H1 (cell line): ENCODE measurements at regions of chr7 and their contacts with region 1.

Region 1: DNA sequence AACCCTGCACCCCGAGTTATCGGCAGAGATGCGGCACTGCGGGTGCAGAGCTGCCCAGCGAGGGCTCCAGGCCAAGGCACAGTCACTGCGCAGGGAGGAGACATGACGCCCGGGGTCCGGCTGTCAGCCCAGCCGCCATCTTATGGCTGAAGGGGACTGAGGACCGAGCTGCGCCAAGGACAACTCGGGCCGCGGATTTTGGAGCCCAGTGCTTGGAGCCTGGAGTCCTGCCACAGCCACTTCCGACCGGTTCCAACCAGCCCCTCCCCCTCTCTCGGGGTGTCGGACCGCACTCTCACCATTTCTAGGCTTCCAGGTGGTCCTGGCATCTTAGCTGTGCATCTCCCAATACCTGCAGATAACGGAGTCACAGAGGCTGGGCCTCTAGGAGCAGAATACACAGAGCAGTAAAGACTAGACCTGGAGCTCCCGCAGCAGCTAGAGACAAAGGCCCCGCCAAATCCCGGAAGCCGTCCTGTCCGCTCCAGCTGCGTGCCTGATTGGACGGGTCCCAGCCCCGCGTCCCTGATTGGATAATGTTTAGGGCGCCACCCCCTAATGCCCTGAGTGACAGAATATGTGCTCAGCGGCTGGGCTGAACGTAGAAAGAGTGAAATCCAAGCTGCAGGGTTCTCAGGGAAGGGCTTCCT is at the start of gene ZNF680:
- DNase-seq: peak; percentile 71 to 85
- H3K4me3 ChIP-seq: peak within 1 kb of the TSS in 1 of 4 experiments; percentile 76; a peak in 2 of 8 replicates
- H3K27ac ChIP-seq: no peak within 1 kb of the TSS
- H3K4me1 ChIP-seq: no peaks in the 10 kb centered on the region; a peak in 1 of 7 replicates
- H3K27me3 ChIP-seq: no peaks in the 10 kb centered on the region
- CTCF ChIP-seq: no peak
- EP300 ChIP-seq: no peak
- POLR2A ChIP-seq: no peak
- RAD21 ChIP-seq: no peak
- total RNA-seq, gene ZNF680: 15.3 and 16.9 TPM in 2 replicates

Region 2: GRCh38 chr7:64574540-64575126 is 11.9 kb after region 1 on chr7:
- CTCF ChIA-PET with region 1: interaction called, 4 read pairs
- POLR2A ChIA-PET with region 1: interaction called, 46 read pairs
- DNase-seq: peak in 1 of 2 experiments; percentile 50
- H3K4me3 ChIP-seq: peak overlapping the region in 1 of 4 experiments; percentile 20; a peak in 2 of 8 replicates
- H3K27ac ChIP-seq: no peak overlapping the region
- H3K4me1 ChIP-seq: no peaks in the 10 kb centered on the region
- H3K27me3 ChIP-seq: no peaks in the 10 kb centered on the region
- CTCF ChIP-seq: no peak
- EP300 ChIP-seq: no peak
- POLR2A ChIP-seq: no peak
- RAD21 ChIP-seq: no peak

Region 3: DNA sequence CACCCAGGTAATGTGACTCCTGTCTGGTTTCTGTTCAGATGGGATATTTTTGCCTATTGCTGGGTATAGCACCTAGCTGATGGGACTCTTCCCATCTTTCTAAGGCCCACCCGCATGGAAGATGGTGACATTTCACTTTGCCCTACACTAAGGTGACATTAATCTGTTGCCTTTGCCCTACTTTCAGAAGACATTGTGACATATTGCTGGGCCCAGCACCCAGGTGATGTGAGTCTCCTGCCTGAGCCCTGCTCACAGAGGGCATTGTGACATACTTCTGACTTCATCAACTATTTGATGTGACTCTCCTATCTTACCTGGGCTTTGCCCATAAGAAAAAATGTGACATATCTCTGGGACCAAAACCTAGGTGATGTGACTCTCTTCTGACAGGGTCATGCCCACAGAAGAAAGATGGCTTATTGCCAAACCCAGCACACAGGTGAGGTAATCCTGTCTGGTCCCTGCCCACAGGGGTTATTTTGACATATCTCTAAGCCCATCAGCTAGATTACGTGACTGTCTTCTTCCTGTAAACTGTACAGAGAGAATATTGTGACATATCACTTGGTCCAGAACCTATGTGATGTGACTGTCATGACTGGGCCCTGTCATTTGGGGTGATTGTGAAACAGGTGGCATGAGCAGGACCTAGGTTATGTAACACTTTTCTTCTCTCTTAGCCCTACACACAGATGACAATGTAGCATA is 48.8 kb after region 1 on chr7:
- CTCF ChIA-PET with region 1: no interaction called
- POLR2A ChIA-PET with region 1: no interaction called
- DNase-seq: no peak
- H3K4me3 ChIP-seq: no peak overlapping the region
- H3K27ac ChIP-seq: no peak overlapping the region
- H3K4me1 ChIP-seq: no peaks in the 10 kb centered on the region
- H3K27me3 ChIP-seq: no peaks in the 10 kb centered on the region
- CTCF ChIP-seq: no peak
- EP300 ChIP-seq: no peak
- POLR2A ChIP-seq: no peak
- RAD21 ChIP-seq: no peak